ENCODE measurements at regions of chr9 and their contacts with region 1.

Region 1: DNA sequence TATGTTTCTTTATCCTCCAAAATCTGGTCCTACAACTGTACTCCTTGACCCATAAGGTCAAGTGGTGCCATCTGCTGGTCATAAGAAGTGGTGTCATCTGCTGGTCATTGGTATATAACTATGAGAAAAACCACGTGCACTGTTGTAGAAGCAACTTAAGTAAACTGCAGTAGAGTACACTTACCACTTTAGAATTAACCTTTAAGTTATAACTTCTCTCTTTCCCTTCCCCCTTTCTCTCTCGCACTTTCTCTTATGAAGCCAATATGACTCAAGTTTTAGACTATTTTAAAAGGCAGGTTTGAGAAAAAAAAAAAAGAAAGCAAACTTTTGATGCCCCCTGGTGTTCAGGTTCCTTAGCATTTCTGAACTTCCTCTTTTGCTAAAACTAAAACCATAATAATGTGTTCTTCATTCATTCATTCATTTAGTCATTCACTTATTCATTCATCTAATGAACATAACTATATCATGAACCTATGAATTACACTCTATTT is 12.8 kb upstream of the MTAP start:
- DNase-seq: peak; percentile 66 to 76 (median 74)
- H3K4me3 ChIP-seq: no peak overlapping the region
- H3K4me3 Mint-ChIP-seq: peak overlapping the region; percentile 8 to 88 (median 76)
- H3K27ac ChIP-seq: no peak overlapping the region
- H3K27ac Mint-ChIP-seq: peak overlapping the region in 4 of 7 donors; percentile 3 to 61 (median 30)
- H3K4me1 ChIP-seq: no peaks in the 10 kb centered on the region
- H3K4me1 Mint-ChIP-seq: peaks cover 0 to 1% (median 0%) of the 10 kb centered on the region in 4 donors
- H3K27me3 ChIP-seq: no peaks in the 10 kb centered on the region
- H3K27me3 Mint-ChIP-seq: peaks cover 2 to 8% of the 10 kb centered on the region in 2 donors

Region 2: GRCh38 chr9:21239911-21240310 is 549.7 kb before region 1 on chr9 and contains the start of gene IFNA14:
- CTCF ChIA-PET with region 1: no interaction called
- POLR2A ChIA-PET with region 1: no interaction called
- intact Hi-C with region 1: loop called (anchors 1 kb)
- DNase-seq: no peak
- H3K4me3 ChIP-seq: no peak within 1 kb of the TSS
- H3K4me3 Mint-ChIP-seq: no peak within 1 kb of the TSS
- H3K27ac ChIP-seq: no peak within 1 kb of the TSS
- H3K27ac Mint-ChIP-seq: no peak within 1 kb of the TSS
- H3K4me1 ChIP-seq: peaks cover 5% of the 10 kb centered on the region
- H3K4me1 Mint-ChIP-seq: peaks cover 4 to 12% (median 7%) of the 10 kb centered on the region in 4 donors
- H3K27me3 ChIP-seq: no peaks in the 10 kb centered on the region
- H3K27me3 Mint-ChIP-seq: peaks cover 2 to 15% of the 10 kb centered on the region in 2 donors
- total RNA-seq, gene IFNA14: not detected

Region 3: GRCh38 chr9:21317956-21318923 is 471.3 kb before region 1 on chr9:
- CTCF ChIA-PET with region 1: interaction called, 7 read pairs
- POLR2A ChIA-PET with region 1: no interaction called
- intact Hi-C with region 1: loop called (anchors 1 kb)
- DNase-seq: peak; percentile 17 to 40 (median 33)
- H3K4me3 ChIP-seq: no peak overlapping the region
- H3K4me3 Mint-ChIP-seq: no peak overlapping the region
- H3K27ac ChIP-seq: no peak overlapping the region
- H3K27ac Mint-ChIP-seq: peak overlapping the region in 6 of 7 donors; percentile 17 to 87 (median 70)
- H3K4me1 ChIP-seq: no peaks in the 10 kb centered on the region
- H3K4me1 Mint-ChIP-seq: peaks cover 0 to 5% (median 3%) of the 10 kb centered on the region in 4 donors
- H3K27me3 ChIP-seq: no peaks in the 10 kb centered on the region
- H3K27me3 Mint-ChIP-seq: no peaks in the 10 kb centered on the region

Region 4: GRCh38 chr9:21434202-21435014 is 355.2 kb before region 1 on chr9:
- CTCF ChIA-PET with region 1: interaction called, 9 read pairs
- POLR2A ChIA-PET with region 1: no interaction called
- intact Hi-C with region 1: loop called (anchors 1 kb)
- DNase-seq: peak; percentile 31 to 55 (median 40)
- H3K4me3 ChIP-seq: no peak overlapping the region
- H3K4me3 Mint-ChIP-seq: no peak overlapping the region
- H3K27ac ChIP-seq: no peak overlapping the region
- H3K27ac Mint-ChIP-seq: no peak overlapping the region
- H3K4me1 ChIP-seq: no peaks in the 10 kb centered on the region
- H3K4me1 Mint-ChIP-seq: no peaks in the 10 kb centered on the region
- H3K27me3 ChIP-seq: no peaks in the 10 kb centered on the region
- H3K27me3 Mint-ChIP-seq: peaks cover 14 to 19% of the 10 kb centered on the region in 2 donors

Region 5: GRCh38 chr9:21491742-21492141 is 297.8 kb before region 1 on chr9:
- CTCF ChIA-PET with region 1: interaction called, 15 read pairs
- POLR2A ChIA-PET with region 1: no interaction called
- intact Hi-C with region 1: loop called (anchors 1 kb)
- DNase-seq: no peak
- H3K4me3 ChIP-seq: no peak overlapping the region
- H3K4me3 Mint-ChIP-seq: no peak overlapping the region
- H3K27ac ChIP-seq: no peak overlapping the region
- H3K27ac Mint-ChIP-seq: no peak overlapping the region
- H3K4me1 ChIP-seq: no peaks in the 10 kb centered on the region
- H3K4me1 Mint-ChIP-seq: peaks cover 0 to 6% (median 0%) of the 10 kb centered on the region in 4 donors
- H3K27me3 ChIP-seq: no peaks in the 10 kb centered on the region
- H3K27me3 Mint-ChIP-seq: peaks cover 0 to 2% of the 10 kb centered on the region in 2 donors

Region 6: GRCh38 chr9:21576331-21577189 is 213.0 kb before region 1 on chr9:
- CTCF ChIA-PET with region 1: interaction called, 3 read pairs
- POLR2A ChIA-PET with region 1: no interaction called
- intact Hi-C with region 1: loop called (anchors 5 kb)
- DNase-seq: peak; percentile 31 to 56 (median 43)
- H3K4me3 ChIP-seq: no peak overlapping the region
- H3K4me3 Mint-ChIP-seq: peak overlapping the region; percentile 3 to 79 (median 55)
- H3K27ac ChIP-seq: no peak overlapping the region
- H3K27ac Mint-ChIP-seq: peak overlapping the region; percentile 19 to 94 (median 81)
- H3K4me1 ChIP-seq: peaks cover 35% of the 10 kb centered on the region
- H3K4me1 Mint-ChIP-seq: peaks cover 24 to 39% (median 34%) of the 10 kb centered on the region in 4 donors
- H3K27me3 ChIP-seq: no peaks in the 10 kb centered on the region
- H3K27me3 Mint-ChIP-seq: no peaks in the 10 kb centered on the region

Region 7: DNA sequence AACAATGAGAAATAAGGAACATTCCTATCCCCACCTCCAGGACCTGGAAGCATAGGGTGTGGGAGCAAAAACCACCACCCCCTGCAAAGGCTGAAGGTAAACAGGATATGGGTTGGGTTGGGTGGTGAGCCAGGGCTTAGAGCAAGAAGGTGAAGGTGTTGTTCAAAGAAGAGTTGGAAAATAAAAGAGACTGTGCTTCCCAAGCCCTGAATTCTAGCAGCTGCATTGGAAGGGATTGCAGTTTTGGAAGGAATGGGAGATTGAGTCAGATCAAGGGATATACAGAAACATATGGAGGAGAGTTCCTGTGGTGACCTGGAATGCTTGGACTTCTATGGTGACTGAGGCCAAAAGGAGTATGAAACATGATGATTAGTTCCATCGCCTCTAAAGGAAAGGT is 11.9 kb before region 1 on chr9:
- CTCF ChIA-PET with region 1: interaction called, 24 read pairs
- POLR2A ChIA-PET with region 1: interaction called, 13 read pairs
- intact Hi-C with region 1: no loop called
- DNase-seq: peak in 3 of 5 donors; percentile 7 to 18 (median 12)
- H3K4me3 ChIP-seq: peak overlapping the region in 1 of 2 donors; percentile 30
- H3K4me3 Mint-ChIP-seq: no peak overlapping the region
- H3K27ac ChIP-seq: no peak overlapping the region
- H3K27ac Mint-ChIP-seq: no peak overlapping the region
- H3K4me1 ChIP-seq: peaks cover 39% of the 10 kb centered on the region
- H3K4me1 Mint-ChIP-seq: peaks cover 0 to 4% (median 3%) of the 10 kb centered on the region in 4 donors
- H3K27me3 ChIP-seq: no peaks in the 10 kb centered on the region
- H3K27me3 Mint-ChIP-seq: no peaks in the 10 kb centered on the region

Region 8: DNA sequence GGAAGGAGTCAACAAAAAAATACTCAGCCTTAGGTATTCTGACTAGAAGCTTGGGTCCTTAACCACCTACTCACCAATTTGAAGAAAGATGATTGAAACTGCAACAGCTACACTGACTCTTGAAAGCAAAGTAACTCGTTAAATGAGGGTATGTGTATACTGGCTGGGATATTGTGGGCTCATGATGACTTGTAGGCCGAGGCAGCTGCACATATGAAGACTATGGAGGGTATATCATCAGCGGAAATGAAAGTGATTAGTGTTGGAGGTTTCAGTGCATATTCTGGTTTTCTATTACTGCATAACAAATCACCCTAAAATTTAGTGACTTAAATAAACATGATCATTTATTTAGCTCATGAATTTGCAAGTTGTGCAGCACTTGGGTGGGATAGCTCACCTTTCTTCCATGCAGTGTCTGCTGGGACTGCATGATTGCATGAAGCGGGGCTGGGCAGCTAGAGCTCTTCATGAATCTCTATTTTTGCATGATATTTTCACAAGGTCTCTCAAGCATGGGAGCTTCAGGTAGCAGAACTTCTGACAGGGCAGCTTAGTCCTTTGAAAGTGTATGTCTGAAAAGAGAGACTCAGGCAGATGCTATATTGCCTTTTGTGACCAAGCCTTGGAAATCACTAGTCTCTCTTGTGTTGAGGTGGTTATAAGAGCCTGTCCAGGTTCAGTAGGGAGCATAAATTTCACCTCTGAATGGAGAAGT is 315.6 kb after region 1 on chr9:
- CTCF ChIA-PET with region 1: no interaction called
- POLR2A ChIA-PET with region 1: no interaction called
- intact Hi-C with region 1: no loop called
- DNase-seq: no peak
- H3K4me3 ChIP-seq: no peak overlapping the region
- H3K4me3 Mint-ChIP-seq: peak overlapping the region in 4 of 8 donors; percentile 3 to 24 (median 8)
- H3K27ac ChIP-seq: no peak overlapping the region
- H3K27ac Mint-ChIP-seq: peak overlapping the region in 1 of 7 donors; percentile 32
- H3K4me1 ChIP-seq: peaks cover 27% of the 10 kb centered on the region
- H3K4me1 Mint-ChIP-seq: peaks cover 18 to 23% (median 22%) of the 10 kb centered on the region in 4 donors
- H3K27me3 ChIP-seq: no peaks in the 10 kb centered on the region
- H3K27me3 Mint-ChIP-seq: no peaks in the 10 kb centered on the region